ENCODE measurements at regions of chr1 and their contacts with region 1.

Region 1: GRCh38 chr1:69671363-69672010 is 103.8 kb downstream of the LRRC7 start:
- DNase-seq: peak; percentile 8
- H3K4me3 ChIP-seq: no peak overlapping the region
- H3K27ac ChIP-seq: no peak overlapping the region
- H3K4me1 ChIP-seq: no peaks in the 10 kb centered on the region
- H3K27me3 ChIP-seq: no peaks in the 10 kb centered on the region
- CTCF ChIP-seq: no peak

Region 2: GRCh38 chr1:69611316-69611715 is 60.2 kb before region 1 on chr1:
- CTCF ChIA-PET with region 1: no interaction called
- dilution Hi-C with region 1: loop called (anchors 10 kb)
- in situ Hi-C with region 1: no loop called
- intact Hi-C with region 1: no loop called
- DNase-seq: peak; percentile 35
- H3K4me3 ChIP-seq: no peak overlapping the region
- H3K27ac ChIP-seq: peak overlapping the region; percentile 18
- H3K4me1 ChIP-seq: peaks cover 8% of the 10 kb centered on the region
- H3K27me3 ChIP-seq: no peaks in the 10 kb centered on the region
- CTCF ChIP-seq: no peak

Region 3: GRCh38 chr1:69648486-69648885 is 23.0 kb before region 1 on chr1:
- CTCF ChIA-PET with region 1: no interaction called
- dilution Hi-C with region 1: no loop called
- in situ Hi-C with region 1: no loop called
- intact Hi-C with region 1: no loop called
- DNase-seq: peak; percentile 28
- H3K4me3 ChIP-seq: no peak overlapping the region
- H3K27ac ChIP-seq: no peak overlapping the region
- H3K4me1 ChIP-seq: peaks cover 6% of the 10 kb centered on the region
- H3K27me3 ChIP-seq: no peaks in the 10 kb centered on the region
- CTCF ChIP-seq: no peak